ENCODE measurements at regions of chr5 and their contacts with region 1.

Region 1: DNA sequence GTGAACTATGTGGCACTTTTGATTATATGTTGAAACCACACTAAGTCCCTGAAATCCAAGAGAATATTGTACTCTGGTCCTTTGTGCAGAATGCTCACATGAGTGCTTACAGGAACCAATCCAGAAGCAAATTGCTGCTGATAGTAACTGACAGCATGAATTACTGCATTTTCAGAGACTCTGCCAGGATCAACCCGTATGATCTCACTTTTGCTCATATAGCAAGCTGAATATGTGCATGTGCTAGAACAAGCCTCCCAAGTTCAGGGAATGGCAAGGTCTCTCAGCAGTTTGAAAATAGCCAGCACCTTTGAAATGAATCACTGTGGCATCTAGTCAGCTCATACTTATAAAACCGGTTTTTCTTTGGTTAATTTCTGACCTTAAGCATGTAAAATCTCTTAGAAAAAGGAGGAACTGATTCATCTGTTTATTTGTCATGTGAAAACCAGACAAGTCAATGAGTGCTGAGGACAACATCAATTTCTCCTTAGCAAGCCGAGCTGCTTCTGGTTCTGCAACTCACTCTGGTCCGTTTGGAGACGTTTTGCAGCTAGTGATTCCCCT is 215.7 kb upstream of the ELL2 start:
- DNase-seq: peak; percentile 94
- ATAC-seq: peak; percentile 92
- H3K4me3 ChIP-seq: no peak overlapping the region
- H3K27ac ChIP-seq: peak overlapping the region; percentile 69
- H3K4me1 ChIP-seq: peaks cover 50% of the 10 kb centered on the region
- H3K27me3 ChIP-seq: no peaks in the 10 kb centered on the region
- CTCF ChIP-seq: no peak

Region 2: GRCh38 chr5:95927927-95928723 is 249.3 kb before region 1 on chr5:
- CTCF ChIA-PET with region 1: no interaction called
- POLR2A ChIA-PET with region 1: no interaction called
- intact Hi-C with region 1: no loop called
- DNase-seq: no peak
- ATAC-seq: no peak
- H3K4me3 ChIP-seq: no peak overlapping the region
- H3K27ac ChIP-seq: no peak overlapping the region
- H3K4me1 ChIP-seq: 0 out of 2 replicates have a peak, but pooled peaks cover 5% of the 10 kb centered on the region
- H3K27me3 ChIP-seq: no peaks in the 10 kb centered on the region
- CTCF ChIP-seq: no peak

Region 3: DNA sequence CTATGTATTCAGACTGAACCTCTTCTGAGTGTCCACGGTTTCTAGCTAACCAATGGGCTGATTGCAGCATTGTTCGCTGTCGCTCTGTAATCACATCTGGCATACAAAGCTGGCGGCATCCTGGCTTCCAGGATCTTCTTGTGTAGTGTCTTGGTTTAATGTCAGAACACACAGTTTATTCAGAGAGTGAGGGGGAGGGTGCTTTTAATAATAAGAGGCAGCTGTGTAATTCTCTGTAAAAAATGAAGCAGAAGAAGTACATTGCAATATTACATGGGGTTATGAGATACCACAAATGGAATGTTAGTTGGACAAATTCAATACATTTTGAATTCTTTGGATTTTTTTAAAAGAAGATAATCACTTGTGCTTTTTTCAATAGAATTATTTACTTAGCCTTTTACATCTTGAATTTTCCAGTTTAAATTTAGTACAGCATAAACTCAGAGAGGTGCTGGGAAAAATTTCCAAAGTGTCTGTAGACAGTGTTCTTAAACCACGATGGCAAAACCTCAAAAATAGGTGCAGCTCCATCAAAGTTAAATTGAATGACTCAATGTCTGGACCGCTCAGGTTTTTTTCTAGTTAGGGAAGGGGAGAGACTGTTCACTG is 49.7 kb after region 1 on chr5:
- CTCF ChIA-PET with region 1: no interaction called
- POLR2A ChIA-PET with region 1: no interaction called
- intact Hi-C with region 1: loop called (anchors 5 kb)
- DNase-seq: peak; percentile 80
- ATAC-seq: peak; percentile 86
- H3K4me3 ChIP-seq: no peak overlapping the region
- H3K27ac ChIP-seq: peak overlapping the region; percentile 84
- H3K4me1 ChIP-seq: peaks cover 28% of the 10 kb centered on the region
- H3K27me3 ChIP-seq: no peaks in the 10 kb centered on the region
- CTCF ChIP-seq: no peak